ENCODE measurements at regions of chr12 and their contacts with region 1.

Region 1: DNA sequence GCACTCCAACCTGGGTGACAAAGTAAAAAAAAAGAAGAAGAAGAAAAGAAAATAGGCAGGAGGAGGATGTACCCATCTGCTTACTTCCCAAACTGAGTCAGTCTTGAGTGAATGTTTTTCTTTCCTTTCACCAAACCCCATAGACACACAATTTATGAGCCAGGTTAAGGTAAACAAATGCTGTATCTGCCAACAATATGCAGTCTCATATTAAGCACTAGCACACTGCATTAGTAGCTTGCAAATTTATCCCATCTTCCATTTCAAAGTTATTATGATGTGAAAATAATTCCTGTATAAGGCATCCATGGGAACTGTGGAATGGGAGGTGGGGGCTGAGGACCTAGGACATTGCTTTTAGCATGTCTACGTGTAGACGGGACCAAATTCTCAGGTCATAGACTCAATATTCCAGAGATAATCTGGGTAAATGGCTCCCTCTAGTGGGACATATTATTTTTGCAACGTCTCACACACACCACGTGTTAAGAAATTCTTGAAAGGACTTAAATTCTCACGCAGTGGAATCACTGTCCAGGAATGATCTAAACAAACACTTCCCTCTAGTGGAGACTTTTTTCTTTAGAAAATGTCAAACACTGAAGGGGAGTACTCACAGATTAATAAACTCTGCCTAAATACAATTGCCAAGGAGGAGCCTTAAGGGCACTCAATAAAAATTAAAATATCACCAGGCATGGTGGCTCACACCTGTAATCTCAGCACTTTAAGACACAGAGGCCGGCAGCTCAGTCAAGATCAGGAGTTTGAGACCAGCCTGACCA is 17.1 kb upstream of the OR10P1 start:
- DNase-seq: peak; percentile 92
- H3K4me3 Mint-ChIP-seq: no peak overlapping the region
- H3K27ac Mint-ChIP-seq: no peak overlapping the region
- H3K4me1 Mint-ChIP-seq: no peaks in the 10 kb centered on the region
- H3K27me3 Mint-ChIP-seq: peaks cover 79% of the 10 kb centered on the region
- CTCF ChIP-seq: peak; percentile 69

Region 2: GRCh38 chr12:55188974-55189556 is 430.5 kb before region 1 on chr12:
- CTCF ChIA-PET with region 1: interaction called, 65 read pairs
- POLR2A ChIA-PET with region 1: no interaction called
- intact Hi-C with region 1: loop called (anchors 1 kb)
- DNase-seq: peak; percentile 79
- H3K4me3 Mint-ChIP-seq: no peak overlapping the region
- H3K27ac Mint-ChIP-seq: no peak overlapping the region
- H3K4me1 Mint-ChIP-seq: no peaks in the 10 kb centered on the region
- H3K27me3 Mint-ChIP-seq: peaks cover 71% of the 10 kb centered on the region
- CTCF ChIP-seq: peak; percentile 47

Region 3: GRCh38 chr12:55194382-55194781 is 425.2 kb before region 1 on chr12:
- CTCF ChIA-PET with region 1: interaction called, 65 read pairs
- POLR2A ChIA-PET with region 1: no interaction called
- intact Hi-C with region 1: loop called (anchors 1 kb)
- DNase-seq: no peak
- H3K4me3 Mint-ChIP-seq: no peak overlapping the region
- H3K27ac Mint-ChIP-seq: no peak overlapping the region
- H3K4me1 Mint-ChIP-seq: no peaks in the 10 kb centered on the region
- H3K27me3 Mint-ChIP-seq: peaks cover 85% of the 10 kb centered on the region
- CTCF ChIP-seq: no peak

Region 4: DNA sequence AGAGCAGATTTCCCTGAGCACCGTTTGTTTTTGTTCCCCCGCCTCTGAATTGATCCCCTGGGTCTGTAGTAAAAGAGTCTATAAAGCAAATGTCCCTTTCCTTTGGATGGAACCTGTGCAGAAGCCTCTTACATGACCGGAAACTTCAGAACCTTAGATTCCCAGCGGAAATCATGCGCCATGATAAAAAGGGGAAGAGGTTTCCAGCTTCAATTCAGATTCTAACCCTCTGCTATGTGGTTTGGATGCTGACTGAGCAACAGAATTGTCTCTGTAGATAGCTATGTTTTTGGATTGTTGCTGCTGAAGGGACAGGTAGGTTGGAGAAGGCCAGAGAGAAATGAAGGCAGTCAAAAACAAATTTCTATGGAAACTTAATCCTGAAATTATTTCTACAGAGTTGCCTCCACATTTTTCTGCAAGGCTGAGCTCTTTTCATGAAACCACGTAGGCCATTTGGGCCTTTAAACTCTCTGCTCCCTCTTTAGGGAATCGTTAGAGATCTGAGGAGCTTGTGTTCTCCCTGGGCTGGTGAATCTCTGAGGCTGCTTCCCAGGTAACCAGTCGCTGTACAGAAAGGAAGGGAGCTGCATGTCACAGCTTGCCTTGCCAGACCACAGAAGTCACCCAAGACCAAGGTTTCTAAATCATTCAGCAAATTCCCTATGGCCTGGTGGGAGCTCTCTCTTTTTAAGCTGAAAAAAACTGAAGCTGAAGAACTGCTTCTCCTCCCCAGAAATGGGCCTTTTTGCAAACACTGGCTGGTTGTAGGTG is 11.5 kb before region 1 on chr12:
- CTCF ChIA-PET with region 1: interaction called, 17 read pairs
- POLR2A ChIA-PET with region 1: no interaction called
- intact Hi-C with region 1: no loop called
- DNase-seq: peak; percentile 25
- H3K4me3 Mint-ChIP-seq: no peak overlapping the region
- H3K27ac Mint-ChIP-seq: no peak overlapping the region
- H3K4me1 Mint-ChIP-seq: no peaks in the 10 kb centered on the region
- H3K27me3 Mint-ChIP-seq: peaks cover 79% of the 10 kb centered on the region
- CTCF ChIP-seq: no peak

Region 5: GRCh38 chr12:55631733-55632132 is 12.2 kb after region 1 on chr12:
- CTCF ChIA-PET with region 1: interaction called, 15 read pairs
- POLR2A ChIA-PET with region 1: no interaction called
- intact Hi-C with region 1: no loop called
- DNase-seq: peak; percentile 21
- H3K4me3 Mint-ChIP-seq: no peak overlapping the region
- H3K27ac Mint-ChIP-seq: no peak overlapping the region
- H3K4me1 Mint-ChIP-seq: no peaks in the 10 kb centered on the region
- H3K27me3 Mint-ChIP-seq: peaks cover 53% of the 10 kb centered on the region
- CTCF ChIP-seq: no peak